ENCODE measurements at regions of chr6 and their contacts with region 1.

Region 1: DNA sequence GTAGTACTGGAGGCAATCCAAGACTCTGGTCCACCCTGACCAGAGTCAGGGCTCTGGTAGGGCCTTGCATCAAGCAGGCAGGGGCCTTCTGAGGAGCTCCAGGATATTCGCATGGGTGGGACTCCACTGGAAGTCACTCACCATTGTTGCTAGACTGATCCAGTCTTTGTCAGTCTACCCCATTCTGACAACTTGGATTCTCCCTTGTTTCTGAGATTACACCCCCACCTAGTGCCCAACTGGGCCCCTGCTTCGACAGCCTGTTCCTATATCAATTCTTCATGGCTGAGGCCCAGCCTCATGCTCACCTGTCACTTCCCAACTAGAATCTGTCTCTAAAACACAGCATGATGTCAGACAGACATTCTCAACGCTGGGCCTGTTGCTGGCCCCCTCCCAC is 5.2 kb downstream of the SLC35D3 start:
- DNase-seq: peak in 2 of 4 experiments; percentile 51 to 65
- ATAC-seq: peak; percentile 89
- H3K4me3 ChIP-seq: no peak overlapping the region
- H3K27ac ChIP-seq: no peak overlapping the region
- H3K4me1 ChIP-seq: peaks cover 0 to 18% of the 10 kb centered on the region in 2 experiments; a peak in 2 of 5 replicates
- H3K27me3 ChIP-seq: peaks cover 8 to 36% of the 10 kb centered on the region in 2 experiments; a peak in 3 of 5 replicates
- CTCF ChIP-seq: peak; percentile 64 to 78 (median 78)
- EP300 ChIP-seq: no peak
- POLR2A ChIP-seq: no peak
- RAD21 ChIP-seq: peak; percentile 71 to 88

Region 2: DNA sequence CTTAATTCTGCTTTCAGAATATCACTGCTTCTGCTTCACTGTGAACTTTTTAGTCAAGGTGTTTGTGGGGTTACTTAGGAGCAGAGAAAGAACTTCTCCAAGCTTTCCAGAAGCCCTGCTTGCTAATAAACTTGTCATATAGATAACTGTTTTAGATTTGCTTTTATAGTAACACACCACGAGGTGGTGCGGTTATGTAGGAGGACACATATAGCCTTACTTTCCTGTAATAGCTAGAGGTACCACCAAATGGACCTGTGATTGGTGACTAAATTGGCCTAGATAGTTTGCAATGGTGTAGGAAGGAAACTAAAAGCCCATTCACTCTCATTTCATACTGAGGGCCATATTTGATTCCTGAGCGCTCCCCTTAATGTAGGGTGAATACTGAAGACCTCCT is 585.3 kb before region 1 on chr6:
- CTCF ChIA-PET with region 1: no interaction called
- POLR2A ChIA-PET with region 1: no interaction called
- in situ Hi-C with region 1: no loop called
- intact Hi-C with region 1: loop called (anchors 2 kb)
- DNase-seq: peak in 2 of 4 experiments; percentile 36 to 72
- ATAC-seq: peak; percentile 84
- H3K4me3 ChIP-seq: no peak overlapping the region
- H3K27ac ChIP-seq: no peak overlapping the region
- H3K4me1 ChIP-seq: no peaks in the 10 kb centered on the region
- H3K27me3 ChIP-seq: peaks cover 0 to 3% of the 10 kb centered on the region in 2 experiments; a peak in 2 of 5 replicates
- CTCF ChIP-seq: peak; percentile 45 to 75 (median 47); a peak in 4 of 6 replicates
- EP300 ChIP-seq: no peak
- POLR2A ChIP-seq: no peak
- RAD21 ChIP-seq: peak; percentile 87 to 94

Region 3: GRCh38 chr6:136371959-136372358 is 555.3 kb before region 1 on chr6:
- CTCF ChIA-PET with region 1: no interaction called
- POLR2A ChIA-PET with region 1: no interaction called
- in situ Hi-C with region 1: no loop called
- intact Hi-C with region 1: no loop called
- DNase-seq: no peak
- ATAC-seq: no peak
- H3K4me3 ChIP-seq: no peak overlapping the region
- H3K27ac ChIP-seq: no peak overlapping the region
- H3K4me1 ChIP-seq: no peaks in the 10 kb centered on the region
- H3K27me3 ChIP-seq: peaks cover 5 to 10% of the 10 kb centered on the region in 2 experiments; a peak in 3 of 5 replicates
- CTCF ChIP-seq: no peak
- EP300 ChIP-seq: no peak
- POLR2A ChIP-seq: no peak
- RAD21 ChIP-seq: no peak

Region 4: DNA sequence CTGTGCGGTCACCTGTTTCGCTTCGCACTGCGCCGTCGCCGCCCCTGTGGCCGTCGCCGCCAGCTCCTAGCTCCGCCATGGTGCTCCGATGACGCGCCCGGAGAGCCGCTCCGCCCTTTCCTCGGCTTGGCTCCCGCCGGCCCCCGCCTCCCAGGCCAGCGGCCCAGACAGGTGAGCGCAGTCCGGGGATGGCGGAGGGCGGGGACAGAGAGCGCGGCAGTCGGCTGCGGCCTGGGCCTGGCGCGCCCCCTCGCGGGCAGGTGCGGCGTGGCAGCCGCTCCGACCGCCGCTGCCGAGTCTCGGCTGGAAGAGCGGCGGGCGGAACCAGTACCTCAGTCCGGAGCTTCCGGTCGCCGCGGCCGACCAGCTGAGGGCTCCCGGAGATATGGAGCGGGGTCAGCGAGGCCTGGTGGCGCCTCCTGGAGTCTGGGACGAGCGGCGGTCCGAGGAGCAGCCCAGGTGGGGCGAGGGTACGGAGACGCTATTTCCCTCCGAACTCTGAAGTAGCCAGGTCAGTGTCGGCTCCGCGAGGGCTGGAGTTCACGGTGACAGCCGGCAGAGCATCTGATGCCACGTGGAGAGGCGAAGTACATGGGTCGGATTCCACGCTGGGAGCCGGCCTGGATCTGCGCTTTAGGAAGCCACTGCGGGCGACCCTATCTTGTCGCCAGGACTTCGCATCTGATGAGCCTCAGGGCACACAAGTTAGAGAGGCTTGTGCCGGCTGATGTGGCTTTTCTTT is 376.8 kb before region 1 on chr6 and contains the start of gene MAP7:
- CTCF ChIA-PET with region 1: no interaction called
- POLR2A ChIA-PET with region 1: no interaction called
- in situ Hi-C with region 1: no loop called
- intact Hi-C with region 1: loop called (anchors 10 kb)
- DNase-seq: peak; percentile 82 to 93 (median 88)
- ATAC-seq: peak; percentile 90
- H3K4me3 ChIP-seq: peak within 1 kb of the TSS; percentile 64
- H3K27ac ChIP-seq: peak within 1 kb of the TSS; percentile 28; the same call in 1 of the 3 replicates
- H3K4me1 ChIP-seq: peaks cover 13 to 17% of the 10 kb centered on the region in 2 experiments
- H3K27me3 ChIP-seq: peaks cover 7 to 8% of the 10 kb centered on the region in 2 experiments; a peak in 3 of 5 replicates
- CTCF ChIP-seq: peak; percentile 78 to 95 (median 92)
- EP300 ChIP-seq: no peak
- POLR2A ChIP-seq: no peak
- RAD21 ChIP-seq: peak; percentile 90 to 91
- polyA plus RNA-seq, gene MAP7: 0.76 to 1.1 TPM

Region 5: DNA sequence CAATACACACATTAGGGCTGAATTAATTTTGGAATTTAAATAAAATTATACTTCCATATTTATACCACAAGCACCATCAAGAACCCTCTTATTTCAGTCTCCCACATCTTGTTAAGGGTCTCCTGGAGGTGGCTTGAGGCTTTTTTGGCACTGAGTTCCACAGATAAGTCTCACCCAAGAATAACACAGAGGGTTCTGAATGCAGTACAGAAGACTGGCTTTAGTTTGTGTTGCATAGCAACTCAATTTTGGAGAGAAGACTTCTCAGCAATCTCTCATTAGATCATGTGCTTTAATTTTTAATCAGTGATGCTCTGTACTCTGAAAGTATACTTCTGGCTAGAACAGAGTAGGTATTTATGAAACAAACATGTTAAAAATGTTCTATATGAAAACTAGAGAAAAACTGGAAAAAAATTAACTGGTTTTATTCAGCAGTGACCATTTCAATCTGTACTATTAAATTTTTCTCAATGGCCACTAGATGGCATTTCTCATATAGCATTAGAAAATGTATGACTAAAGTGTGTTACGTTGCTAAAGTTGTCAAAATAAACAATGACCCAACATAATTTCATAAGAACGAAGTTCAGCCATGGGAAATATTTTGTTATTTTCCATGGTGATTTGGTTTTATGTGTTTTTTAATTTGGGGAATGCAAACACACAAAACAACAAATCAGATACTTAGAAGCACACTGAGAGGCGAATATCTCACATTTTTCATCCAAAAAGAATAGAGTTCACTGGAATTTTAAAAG is 344.4 kb before region 1 on chr6:
- CTCF ChIA-PET with region 1: no interaction called
- POLR2A ChIA-PET with region 1: no interaction called
- in situ Hi-C with region 1: no loop called
- intact Hi-C with region 1: loop called (anchors 10 kb)
- DNase-seq: peak in 2 of 4 experiments; percentile 31 to 37
- ATAC-seq: peak; percentile 72
- H3K4me3 ChIP-seq: no peak overlapping the region
- H3K27ac ChIP-seq: no peak overlapping the region
- H3K4me1 ChIP-seq: no peaks in the 10 kb centered on the region
- H3K27me3 ChIP-seq: no peaks in the 10 kb centered on the region
- CTCF ChIP-seq: peak; percentile 11 to 69 (median 31); a peak in 3 of 6 replicates
- EP300 ChIP-seq: no peak
- POLR2A ChIP-seq: no peak
- RAD21 ChIP-seq: peak; percentile 55 to 72

Region 6: GRCh38 chr6:136643850-136644596 is 283.3 kb before region 1 on chr6:
- CTCF ChIA-PET with region 1: interaction called, 4 read pairs
- POLR2A ChIA-PET with region 1: interaction called, 4 read pairs
- in situ Hi-C with region 1: no loop called
- intact Hi-C with region 1: loop called (anchors 2 kb)
- DNase-seq: peak; percentile 73 to 89 (median 76)
- ATAC-seq: peak; percentile 95
- H3K4me3 ChIP-seq: no peak overlapping the region
- H3K27ac ChIP-seq: no peak overlapping the region
- H3K4me1 ChIP-seq: peaks cover 0 to 8% of the 10 kb centered on the region in 2 experiments; a peak in 2 of 5 replicates
- H3K27me3 ChIP-seq: no peaks in the 10 kb centered on the region
- CTCF ChIP-seq: peak; percentile 90 to 95 (median 93)
- EP300 ChIP-seq: no peak
- POLR2A ChIP-seq: no peak
- RAD21 ChIP-seq: peak; percentile 99

Region 7: DNA sequence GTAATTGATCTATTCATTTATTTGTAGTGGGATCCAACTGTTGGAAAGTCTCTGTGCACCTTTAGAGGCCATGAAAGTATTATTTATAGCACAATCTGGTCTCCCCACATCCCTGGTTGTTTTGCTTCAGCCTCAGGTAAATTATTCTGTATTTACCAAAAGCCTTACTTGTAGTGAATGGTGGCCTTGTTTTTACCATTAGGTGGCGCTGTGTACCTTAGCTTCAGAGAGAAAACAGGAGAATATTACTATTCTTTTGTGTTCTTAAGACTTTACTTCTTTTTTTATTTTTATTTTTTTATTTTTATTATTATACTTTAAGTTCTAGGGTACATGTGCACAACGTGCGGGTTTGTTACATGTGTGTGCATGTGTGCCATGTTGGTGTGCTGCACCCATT is 81.2 kb before region 1 on chr6:
- CTCF ChIA-PET with region 1: interaction called, 10 read pairs
- POLR2A ChIA-PET with region 1: no interaction called
- in situ Hi-C with region 1: no loop called
- intact Hi-C with region 1: loop called (anchors 2 kb)
- DNase-seq: peak; percentile 49 to 75 (median 51)
- ATAC-seq: peak; percentile 85
- H3K4me3 ChIP-seq: no peak overlapping the region
- H3K27ac ChIP-seq: no peak overlapping the region
- H3K4me1 ChIP-seq: no peaks in the 10 kb centered on the region
- H3K27me3 ChIP-seq: no peaks in the 10 kb centered on the region
- CTCF ChIP-seq: peak; percentile 62 to 86 (median 68); a peak in 5 of 6 replicates
- EP300 ChIP-seq: no peak
- POLR2A ChIP-seq: no peak
- RAD21 ChIP-seq: peak; percentile 72 to 85

Region 8: GRCh38 chr6:136945711-136946121 is 18.4 kb after region 1 on chr6:
- CTCF ChIA-PET with region 1: no interaction called
- POLR2A ChIA-PET with region 1: no interaction called
- in situ Hi-C with region 1: no loop called
- intact Hi-C with region 1: no loop called
- DNase-seq: no peak
- ATAC-seq: no peak
- H3K4me3 ChIP-seq: no peak overlapping the region
- H3K27ac ChIP-seq: no peak overlapping the region
- H3K4me1 ChIP-seq: peaks cover 0 to 3% of the 10 kb centered on the region in 2 experiments; a peak in 1 of 5 replicates
- H3K27me3 ChIP-seq: peaks cover 0 to 6% of the 10 kb centered on the region in 2 experiments; a peak in 2 of 5 replicates
- CTCF ChIP-seq: no peak
- EP300 ChIP-seq: no peak
- POLR2A ChIP-seq: no peak
- RAD21 ChIP-seq: no peak